ENCODE measurements at regions of chr12 and their contacts with region 1.

Region 1: DNA sequence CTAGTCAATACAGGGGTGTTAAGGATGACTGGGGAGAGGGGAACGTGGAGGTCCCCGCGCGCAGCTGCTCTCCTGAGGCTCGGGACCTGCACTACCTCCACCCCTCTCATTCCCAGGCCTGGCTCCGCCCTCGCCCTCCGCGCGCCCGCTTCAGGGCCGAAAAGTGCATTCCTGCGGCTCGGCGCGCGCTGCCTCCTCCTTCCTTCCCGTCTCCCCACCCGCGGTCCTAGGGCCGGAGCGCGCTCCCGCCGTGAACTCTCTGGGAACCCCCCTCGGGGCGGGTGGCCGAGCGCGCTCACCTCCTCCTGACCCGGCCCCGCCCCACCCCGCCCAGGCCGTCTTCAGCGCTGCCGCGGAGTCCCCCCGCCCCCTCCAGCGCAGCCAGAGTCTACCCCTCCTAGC is 11.2 kb downstream of the RARG start:
- DNase-seq: peak; percentile 94
- H3K4me3 ChIP-seq: peak overlapping the region; percentile 63
- H3K27ac ChIP-seq: peak overlapping the region; percentile 98
- H3K4me1 ChIP-seq: peaks cover 22% of the 10 kb centered on the region
- H3K27me3 ChIP-seq: no peaks in the 10 kb centered on the region
- CTCF ChIP-seq: no peak

Region 2: DNA sequence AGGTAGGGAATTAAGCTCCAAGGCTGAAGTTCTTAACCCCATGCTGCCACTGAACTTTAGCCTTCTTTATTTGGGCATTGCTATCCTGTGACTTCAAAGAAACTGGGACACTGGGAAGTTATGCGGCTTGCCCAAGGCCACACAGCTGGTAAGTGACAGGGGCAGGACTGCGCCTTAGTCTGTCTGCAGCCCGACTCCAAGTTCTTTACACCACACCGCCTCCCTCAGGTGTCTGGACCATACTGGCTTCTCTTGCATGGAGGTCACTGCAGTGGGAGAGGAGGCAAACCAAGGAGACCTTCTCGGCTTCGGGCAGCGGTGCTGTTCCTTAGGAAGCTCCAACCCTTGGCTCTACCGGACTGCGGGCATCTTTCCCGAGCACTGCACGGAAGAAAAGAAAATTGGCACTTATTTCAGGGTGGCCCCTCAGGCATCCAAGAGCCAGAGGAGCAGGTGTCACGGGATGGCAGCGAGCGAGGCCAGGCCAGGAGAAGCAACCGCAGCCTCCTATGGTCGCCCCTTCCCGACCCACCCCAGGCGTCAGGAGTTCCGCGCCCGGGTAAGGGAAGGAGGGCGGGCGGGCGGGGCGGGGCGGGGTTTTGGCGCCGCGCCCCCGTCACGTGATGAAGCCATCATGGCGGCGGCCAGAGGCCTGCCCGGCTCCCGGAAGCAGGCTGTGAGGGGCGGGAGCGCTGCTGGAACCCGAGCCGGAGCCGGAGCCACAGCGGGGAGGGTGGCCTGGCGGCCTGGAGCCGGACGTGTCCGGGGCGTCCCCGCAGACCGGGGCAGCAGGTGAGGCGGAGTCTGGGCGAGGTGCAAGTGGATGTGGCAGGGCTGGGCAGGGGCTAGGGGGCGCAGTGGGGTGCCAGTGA is 30.9 kb after region 1 on chr12:
- intact Hi-C with region 1: loop called (anchors 2 kb)
- DNase-seq: peak; percentile 79
- H3K4me3 ChIP-seq: peak overlapping the region; percentile 83
- H3K27ac ChIP-seq: peak overlapping the region; percentile 89
- H3K4me1 ChIP-seq: peaks cover 4% of the 10 kb centered on the region
- H3K27me3 ChIP-seq: no peaks in the 10 kb centered on the region
- CTCF ChIP-seq: no peak

Region 3: GRCh38 chr12:53575502-53576253 is 354.9 kb after region 1 on chr12:
- intact Hi-C with region 1: no loop called
- DNase-seq: peak; percentile 38
- H3K4me3 ChIP-seq: no peak overlapping the region
- H3K27ac ChIP-seq: peak overlapping the region; percentile 23
- H3K4me1 ChIP-seq: no peaks in the 10 kb centered on the region
- H3K27me3 ChIP-seq: no peaks in the 10 kb centered on the region
- CTCF ChIP-seq: no peak